CD4-positive, alpha-beta T cell (primary cell): ENCODE measurements at regions of chr11 and their contacts with region 1.

Region 1: GRCh38 chr11:74170694-74171629 is at the starts of genes C2CD3 and PPME1:
- DNase-seq: peak; percentile 93 to 100 (median 97)
- ATAC-seq: peak; percentile 94
- H3K4me3 ChIP-seq: peak within 1 kb of the TSS; percentile 90
- H3K4me3 Mint-ChIP-seq: no peak within 1 kb of the TSS
- H3K27ac ChIP-seq: peak within 1 kb of the TSS; percentile 75 to 78
- H3K27ac Mint-ChIP-seq: no peak within 1 kb of the TSS
- H3K4me1 ChIP-seq: peaks cover 26% of the 10 kb centered on the region
- H3K4me1 Mint-ChIP-seq: peaks cover 20% of the 10 kb centered on the region
- H3K27me3 ChIP-seq: no peaks in the 10 kb centered on the region
- H3K27me3 Mint-ChIP-seq: no peaks in the 10 kb centered on the region
- CTCF ChIP-seq: peak; percentile 24
- total RNA-seq, gene C2CD3: 31.9 to 35.1 TPM
- total RNA-seq, gene PPME1: 13.7 to 16.3 TPM

Region 2: GRCh38 chr11:73597956-73598718 is 572.8 kb before region 1 on chr11 and contains the start of gene FAM168A:
- CTCF ChIA-PET with region 1: no interaction called
- POLR2A ChIA-PET with region 1: interaction called, 3 read pairs
- intact Hi-C with region 1: loop called in 1 of 2 experiments (anchors 2 kb)
- DNase-seq: peak; percentile 87 to 98 (median 92)
- ATAC-seq: peak; percentile 88
- H3K4me3 ChIP-seq: peak within 1 kb of the TSS; percentile 84
- H3K4me3 Mint-ChIP-seq: peak within 1 kb of the TSS; percentile 95
- H3K27ac ChIP-seq: peak within 1 kb of the TSS; percentile 68 to 77
- H3K27ac Mint-ChIP-seq: peak within 1 kb of the TSS; percentile 97
- H3K4me1 ChIP-seq: peaks cover 15% of the 10 kb centered on the region
- H3K4me1 Mint-ChIP-seq: peaks cover 47% of the 10 kb centered on the region
- H3K27me3 ChIP-seq: no peaks in the 10 kb centered on the region
- H3K27me3 Mint-ChIP-seq: no peaks in the 10 kb centered on the region
- CTCF ChIP-seq: peak; percentile 8
- total RNA-seq, gene FAM168A: 17.9 to 19.4 TPM

Region 3: DNA sequence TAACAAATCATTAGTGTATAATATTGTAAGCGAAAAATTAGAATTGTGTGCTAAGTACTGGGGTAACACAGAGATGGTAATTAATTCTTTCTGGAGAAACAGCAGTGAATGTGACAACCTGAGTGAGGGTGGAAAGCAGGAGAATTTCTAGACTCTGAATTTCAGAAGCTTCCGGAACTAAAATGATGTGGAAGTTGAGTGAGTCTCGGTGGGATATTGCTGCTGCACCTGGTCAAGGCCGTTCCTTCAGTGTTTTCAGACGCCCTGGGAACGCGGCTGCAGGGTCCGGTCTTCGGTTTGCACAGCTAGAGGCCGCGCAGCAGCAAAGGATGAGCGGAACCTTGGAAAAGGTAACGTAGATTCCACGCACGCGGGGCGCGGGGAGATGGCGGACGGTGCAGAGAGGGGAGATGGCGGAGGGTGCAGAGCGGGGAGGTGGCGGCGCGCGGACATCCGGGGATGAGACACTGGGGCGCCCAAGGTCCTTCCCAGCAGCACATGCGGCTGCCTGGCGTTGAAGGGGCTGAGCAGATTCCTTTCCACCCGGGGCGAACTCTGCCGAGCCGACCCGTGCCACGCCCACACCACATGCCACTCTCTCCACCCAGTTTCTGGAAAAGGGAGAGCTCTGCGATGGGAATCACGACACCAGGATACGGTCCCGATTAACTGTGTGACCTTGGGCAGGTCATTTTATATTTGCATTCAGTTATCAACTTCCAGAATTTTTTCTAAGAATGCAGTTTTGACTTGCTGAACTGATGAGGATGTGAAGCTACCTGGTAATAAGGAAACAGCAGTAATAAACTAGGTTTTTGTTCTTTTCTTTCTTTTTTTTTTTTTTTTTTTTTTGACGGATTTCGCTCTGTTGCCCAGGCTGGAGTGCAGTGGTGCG is 383.1 kb before region 1 on chr11 and contains the start of gene MRPL48:
- CTCF ChIA-PET with region 1: no interaction called
- POLR2A ChIA-PET with region 1: interaction called, 7 read pairs
- intact Hi-C with region 1: loop called in 1 of 2 experiments (anchors 5 kb)
- DNase-seq: peak; percentile 78 to 93 (median 84)
- ATAC-seq: peak; percentile 99
- H3K4me3 ChIP-seq: peak within 1 kb of the TSS; percentile 93
- H3K4me3 Mint-ChIP-seq: peak within 1 kb of the TSS; percentile 99
- H3K27ac ChIP-seq: peak within 1 kb of the TSS; percentile 80 to 87
- H3K27ac Mint-ChIP-seq: peak within 1 kb of the TSS; percentile 100
- H3K4me1 ChIP-seq: peaks cover 19% of the 10 kb centered on the region
- H3K4me1 Mint-ChIP-seq: peaks cover 31% of the 10 kb centered on the region
- H3K27me3 ChIP-seq: no peaks in the 10 kb centered on the region
- H3K27me3 Mint-ChIP-seq: no peaks in the 10 kb centered on the region
- CTCF ChIP-seq: no peak
- total RNA-seq, gene MRPL48: 9.5 to 10.1 TPM

Region 4: DNA sequence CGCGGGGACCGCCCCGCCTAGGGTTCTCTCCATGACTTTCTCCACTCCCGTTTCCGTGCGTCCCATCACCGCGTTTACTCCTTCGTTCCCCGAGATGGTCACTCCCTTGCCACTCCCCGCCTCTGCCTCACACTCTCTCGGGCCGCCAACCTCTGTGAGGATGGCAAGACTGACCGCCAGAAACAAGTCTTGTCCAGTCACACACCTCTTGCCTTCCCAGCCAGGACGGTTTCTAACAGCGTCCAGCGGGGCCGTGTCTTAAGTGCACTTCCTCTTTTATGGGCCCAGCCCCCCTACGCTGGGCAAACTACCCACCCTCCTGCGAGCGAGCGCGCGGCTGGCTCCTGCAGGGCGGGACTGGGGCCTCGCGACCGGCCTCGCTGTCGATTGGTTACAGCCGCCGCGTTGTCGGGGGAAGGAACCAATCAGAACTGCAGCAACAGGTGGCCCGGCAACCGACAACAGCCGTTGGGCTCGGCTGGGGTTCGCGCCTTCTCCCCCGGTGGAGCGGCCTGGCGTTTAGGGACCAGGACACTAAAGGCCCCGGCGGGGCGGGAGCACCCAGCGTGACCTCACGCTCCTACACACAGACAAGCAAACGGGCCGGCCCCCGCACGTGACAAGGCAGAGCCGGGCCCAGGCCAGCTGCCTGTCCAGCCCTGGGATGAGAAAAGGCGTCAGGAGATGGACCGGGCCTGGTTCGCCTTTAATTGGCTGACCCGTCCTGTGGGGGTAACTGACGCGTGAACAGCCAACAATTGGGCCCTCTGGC is 187.8 kb before region 1 on chr11:
- CTCF ChIA-PET with region 1: no interaction called
- POLR2A ChIA-PET with region 1: interaction called, 16 read pairs
- intact Hi-C with region 1: loop called in 1 of 2 experiments (anchors 5 kb)
- DNase-seq: peak; percentile 86 to 97 (median 90)
- ATAC-seq: peak; percentile 73
- H3K4me3 ChIP-seq: peak overlapping the region; percentile 87
- H3K4me3 Mint-ChIP-seq: peak overlapping the region; percentile 100
- H3K27ac ChIP-seq: peak overlapping the region; percentile 81 to 96
- H3K27ac Mint-ChIP-seq: peak overlapping the region; percentile 98
- H3K4me1 ChIP-seq: peaks cover 50% of the 10 kb centered on the region
- H3K4me1 Mint-ChIP-seq: peaks cover 57% of the 10 kb centered on the region
- H3K27me3 ChIP-seq: no peaks in the 10 kb centered on the region
- H3K27me3 Mint-ChIP-seq: no peaks in the 10 kb centered on the region
- CTCF ChIP-seq: no peak

Region 5: GRCh38 chr11:74398244-74399159 is 227.5 kb after region 1 on chr11 and contains the start of gene PGM2L1:
- CTCF ChIA-PET with region 1: no interaction called
- POLR2A ChIA-PET with region 1: no interaction called
- intact Hi-C with region 1: loop called in 1 of 2 experiments (anchors 2 kb)
- DNase-seq: peak; percentile 86 to 96 (median 92)
- ATAC-seq: peak; percentile 84
- H3K4me3 ChIP-seq: peak within 1 kb of the TSS; percentile 96
- H3K4me3 Mint-ChIP-seq: peak within 1 kb of the TSS; percentile 100
- H3K27ac ChIP-seq: peak within 1 kb of the TSS; percentile 68 to 77
- H3K27ac Mint-ChIP-seq: peak within 1 kb of the TSS; percentile 89
- H3K4me1 ChIP-seq: peaks cover 3% of the 10 kb centered on the region
- H3K4me1 Mint-ChIP-seq: peaks cover 30% of the 10 kb centered on the region
- H3K27me3 ChIP-seq: no peaks in the 10 kb centered on the region
- H3K27me3 Mint-ChIP-seq: no peaks in the 10 kb centered on the region
- CTCF ChIP-seq: no peak
- total RNA-seq, gene PGM2L1: 10.2 to 11.8 TPM

Region 6: DNA sequence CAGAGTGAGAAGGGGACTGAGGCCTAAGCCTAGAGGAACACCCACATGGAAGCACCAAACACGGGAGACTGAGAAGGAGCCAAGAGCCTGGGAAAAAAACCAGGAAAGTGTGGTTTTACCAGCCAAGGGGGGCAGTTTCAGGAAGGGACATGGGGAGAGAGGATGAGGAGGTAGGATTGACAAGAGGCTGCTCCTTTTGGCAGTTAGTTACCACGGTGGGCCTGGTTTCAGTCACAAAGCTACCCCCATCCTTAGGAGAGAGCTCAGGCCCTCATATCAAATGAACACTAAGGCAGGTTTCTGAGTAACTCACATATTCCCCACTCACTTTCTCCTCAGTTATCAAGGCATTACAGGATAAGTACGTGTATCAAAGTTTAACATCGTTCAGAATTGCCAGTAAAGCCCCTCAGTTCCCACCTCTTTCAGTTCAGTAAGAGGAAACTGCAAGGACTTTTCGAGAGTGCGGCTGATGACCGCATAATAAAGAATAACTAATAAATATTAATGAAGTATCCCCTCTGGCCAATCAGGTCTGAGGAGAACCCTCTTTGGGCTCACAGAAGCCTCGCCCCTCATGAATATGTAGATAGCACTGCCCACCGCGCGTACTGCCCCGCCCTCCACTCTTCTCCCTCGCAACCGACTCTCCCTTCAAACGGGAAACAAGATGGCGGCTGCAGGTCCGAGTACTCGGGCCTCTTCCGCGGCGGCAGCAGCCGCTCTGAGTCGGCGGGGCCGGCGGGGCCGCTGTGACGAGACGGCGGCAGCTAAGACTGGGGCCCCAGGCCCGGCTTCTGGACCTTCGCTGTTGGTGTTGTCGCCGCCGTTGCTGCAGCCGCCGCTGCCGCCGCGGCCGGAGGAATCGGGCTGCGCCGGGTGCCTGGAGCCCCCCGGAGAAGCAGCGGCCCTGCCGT is 577.5 kb after region 1 on chr11 and contains the start of gene RNF169:
- CTCF ChIA-PET with region 1: no interaction called
- POLR2A ChIA-PET with region 1: no interaction called
- intact Hi-C with region 1: loop called in 1 of 2 experiments (anchors 5 kb)
- DNase-seq: peak; percentile 79 to 96 (median 84)
- ATAC-seq: peak; percentile 98
- H3K4me3 ChIP-seq: peak within 1 kb of the TSS; percentile 62
- H3K4me3 Mint-ChIP-seq: peak within 1 kb of the TSS; percentile 99
- H3K27ac ChIP-seq: peak within 1 kb of the TSS; percentile 63 to 76
- H3K27ac Mint-ChIP-seq: peak within 1 kb of the TSS; percentile 78
- H3K4me1 ChIP-seq: peaks cover 33% of the 10 kb centered on the region
- H3K4me1 Mint-ChIP-seq: peaks cover 49% of the 10 kb centered on the region
- H3K27me3 ChIP-seq: no peaks in the 10 kb centered on the region
- H3K27me3 Mint-ChIP-seq: no peaks in the 10 kb centered on the region
- CTCF ChIP-seq: no peak
- total RNA-seq, gene RNF169: 15.2 to 15.5 TPM